CD4-positive, alpha-beta T cell (primary cell): ENCODE measurements at regions of chr2 and their contacts with region 1.

Region 1: DNA sequence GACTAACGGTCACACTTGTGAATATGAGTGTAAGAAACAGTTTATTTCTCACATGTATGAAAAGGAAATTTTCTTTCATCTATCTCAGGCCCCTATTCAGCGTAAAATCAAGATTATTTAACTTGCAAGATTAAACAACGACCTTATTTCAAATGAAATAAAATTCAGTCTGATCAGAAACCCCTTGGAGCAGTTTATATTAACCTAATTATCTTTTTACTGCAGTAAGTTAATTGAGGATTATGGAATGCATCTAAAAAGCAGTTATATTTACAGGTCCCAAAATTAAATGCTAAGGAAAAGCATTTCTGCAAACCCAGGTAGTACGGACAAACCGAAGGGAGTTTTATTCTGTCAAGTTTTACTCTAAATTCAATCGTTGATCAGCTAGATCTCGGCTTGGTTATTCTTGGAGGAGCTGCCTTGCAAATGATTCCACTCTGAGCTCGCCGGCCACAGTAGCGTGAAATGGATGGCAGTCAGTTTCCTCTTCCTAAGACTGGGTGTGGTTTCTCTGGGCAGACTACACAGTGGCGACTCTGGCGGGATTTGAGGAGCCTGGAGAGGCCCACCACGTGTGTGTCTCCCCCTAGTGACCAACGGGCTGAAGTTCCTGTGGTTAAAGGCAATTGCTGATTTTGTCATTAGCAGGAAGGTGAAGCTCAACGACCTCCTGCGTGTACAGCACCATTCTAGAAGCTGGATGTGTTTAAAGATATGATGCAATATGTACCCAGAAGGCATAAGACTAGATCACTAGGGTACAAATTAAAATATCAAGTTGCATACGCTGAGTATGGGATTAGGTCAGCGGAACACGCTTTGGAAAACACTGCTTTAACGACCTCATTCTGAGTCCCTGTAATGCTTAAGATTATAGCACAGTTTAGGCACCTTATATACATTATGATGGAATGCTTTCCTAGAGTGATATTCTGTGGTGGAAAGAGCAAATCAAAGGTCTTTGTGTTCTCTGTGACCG is 36.4 kb downstream of the PRKRA start:
- DNase-seq: peak; percentile 48 to 89 (median 60)
- ATAC-seq: peak; percentile 64
- H3K4me3 ChIP-seq: peak overlapping the region; percentile 77
- H3K4me3 Mint-ChIP-seq: peak overlapping the region; percentile 91
- H3K27ac ChIP-seq: peak overlapping the region; percentile 65 to 86
- H3K27ac Mint-ChIP-seq: peak overlapping the region; percentile 81
- H3K4me1 ChIP-seq: peaks cover 12% of the 10 kb centered on the region
- H3K4me1 Mint-ChIP-seq: peaks cover 26% of the 10 kb centered on the region
- H3K27me3 ChIP-seq: no peaks in the 10 kb centered on the region
- H3K27me3 Mint-ChIP-seq: no peaks in the 10 kb centered on the region
- CTCF ChIP-seq: peak; percentile 82

Region 2: GRCh38 chr2:177906041-177906718 is 508.4 kb before region 1 on chr2:
- CTCF ChIA-PET with region 1: no interaction called
- POLR2A ChIA-PET with region 1: no interaction called
- intact Hi-C with region 1: loop called in 1 of 2 experiments (anchors 5 kb)
- DNase-seq: peak; percentile 21 to 67 (median 44)
- ATAC-seq: peak; percentile 68
- H3K4me3 ChIP-seq: no peak overlapping the region
- H3K4me3 Mint-ChIP-seq: no peak overlapping the region
- H3K27ac ChIP-seq: no peak overlapping the region
- H3K27ac Mint-ChIP-seq: no peak overlapping the region
- H3K4me1 ChIP-seq: peaks cover 3% of the 10 kb centered on the region
- H3K4me1 Mint-ChIP-seq: no peaks in the 10 kb centered on the region
- H3K27me3 ChIP-seq: no peaks in the 10 kb centered on the region
- H3K27me3 Mint-ChIP-seq: no peaks in the 10 kb centered on the region
- CTCF ChIP-seq: peak; percentile 73

Region 3: GRCh38 chr2:178251151-178251955 is 163.2 kb before region 1 on chr2:
- CTCF ChIA-PET with region 1: no interaction called
- POLR2A ChIA-PET with region 1: no interaction called
- intact Hi-C with region 1: no loop called
- DNase-seq: no peak
- ATAC-seq: no peak
- H3K4me3 ChIP-seq: no peak overlapping the region
- H3K4me3 Mint-ChIP-seq: no peak overlapping the region
- H3K27ac ChIP-seq: no peak overlapping the region
- H3K27ac Mint-ChIP-seq: no peak overlapping the region
- H3K4me1 ChIP-seq: no peaks in the 10 kb centered on the region
- H3K4me1 Mint-ChIP-seq: no peaks in the 10 kb centered on the region
- H3K27me3 ChIP-seq: no peaks in the 10 kb centered on the region
- H3K27me3 Mint-ChIP-seq: peaks cover 7% of the 10 kb centered on the region
- CTCF ChIP-seq: no peak

Region 4: GRCh38 chr2:178397002-178397605 is 17.5 kb before region 1 on chr2:
- CTCF ChIA-PET with region 1: interaction called, 24 read pairs
- POLR2A ChIA-PET with region 1: interaction called, 4 read pairs
- intact Hi-C with region 1: loop called (anchors 1 to 2 kb)
- DNase-seq: peak in 4 of 14 experiments; percentile 10 to 70 (median 58)
- ATAC-seq: peak; percentile 76
- H3K4me3 ChIP-seq: no peak overlapping the region
- H3K4me3 Mint-ChIP-seq: no peak overlapping the region
- H3K27ac ChIP-seq: no peak overlapping the region
- H3K27ac Mint-ChIP-seq: no peak overlapping the region
- H3K4me1 ChIP-seq: no peaks in the 10 kb centered on the region
- H3K4me1 Mint-ChIP-seq: no peaks in the 10 kb centered on the region
- H3K27me3 ChIP-seq: no peaks in the 10 kb centered on the region
- H3K27me3 Mint-ChIP-seq: peaks cover 5% of the 10 kb centered on the region
- CTCF ChIP-seq: peak; percentile 76

Region 5: GRCh38 chr2:178404368-178404767 is 10.2 kb before region 1 on chr2:
- CTCF ChIA-PET with region 1: interaction called, 24 read pairs
- POLR2A ChIA-PET with region 1: interaction called, 11 read pairs
- intact Hi-C with region 1: no loop called
- DNase-seq: no peak
- ATAC-seq: no peak
- H3K4me3 ChIP-seq: no peak overlapping the region
- H3K4me3 Mint-ChIP-seq: no peak overlapping the region
- H3K27ac ChIP-seq: no peak overlapping the region
- H3K27ac Mint-ChIP-seq: no peak overlapping the region
- H3K4me1 ChIP-seq: no peaks in the 10 kb centered on the region
- H3K4me1 Mint-ChIP-seq: no peaks in the 10 kb centered on the region
- H3K27me3 ChIP-seq: no peaks in the 10 kb centered on the region
- H3K27me3 Mint-ChIP-seq: peaks cover 5% of the 10 kb centered on the region
- CTCF ChIP-seq: no peak

Region 6: DNA sequence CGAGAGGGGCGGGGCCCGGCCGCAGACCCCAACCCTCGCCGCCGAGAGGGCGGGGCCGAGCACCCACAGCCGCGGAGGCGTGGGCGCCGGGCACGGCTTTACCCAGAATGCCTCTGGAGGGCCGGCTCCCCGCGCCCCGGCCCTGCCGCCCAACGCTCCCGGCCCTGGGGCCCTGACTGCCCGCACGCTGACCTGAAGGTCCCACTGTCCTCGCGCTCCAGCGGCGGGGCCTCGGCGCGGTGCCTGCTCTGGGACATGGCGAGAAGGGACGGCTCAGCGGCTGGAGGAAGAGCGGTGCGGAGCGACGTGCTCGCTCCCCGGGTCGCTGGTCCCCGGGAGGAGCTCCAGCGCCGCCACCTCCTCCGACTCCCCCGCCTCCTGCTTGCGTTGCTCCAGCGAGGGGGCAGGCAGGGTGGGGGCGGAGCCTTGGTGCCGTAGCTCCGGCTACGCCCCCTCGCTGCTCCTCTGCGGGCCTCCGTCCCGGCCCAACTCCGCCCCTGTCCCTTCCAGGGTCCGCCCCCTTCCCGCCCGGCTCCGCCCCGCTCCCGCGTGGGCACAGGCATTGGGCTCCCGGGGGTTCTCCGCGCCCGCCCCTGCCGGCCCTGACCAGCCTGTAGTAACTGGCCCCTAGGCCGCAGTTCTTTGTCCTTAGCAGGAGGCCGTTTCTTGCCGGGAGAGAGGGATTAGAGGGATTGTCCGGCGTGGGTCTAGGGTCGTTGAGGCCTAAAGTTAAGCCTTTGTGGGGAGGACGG is 36.4 kb after region 1 on chr2 and contains the starts of genes PJVK and PRKRA:
- CTCF ChIA-PET with region 1: interaction called, 24 read pairs
- POLR2A ChIA-PET with region 1: interaction called, 45 read pairs
- intact Hi-C with region 1: loop called in 1 of 2 experiments (anchors 2 kb)
- DNase-seq: peak; percentile 90 to 98 (median 95)
- ATAC-seq: peak; percentile 84
- H3K4me3 ChIP-seq: peak within 1 kb of the TSS; percentile 77
- H3K4me3 Mint-ChIP-seq: peak within 1 kb of the TSS; percentile 91
- H3K27ac ChIP-seq: peak within 1 kb of the TSS; percentile 78 to 98
- H3K27ac Mint-ChIP-seq: peak within 1 kb of the TSS; percentile 97
- H3K4me1 ChIP-seq: peaks cover 27% of the 10 kb centered on the region
- H3K4me1 Mint-ChIP-seq: peaks cover 35% of the 10 kb centered on the region
- H3K27me3 ChIP-seq: no peaks in the 10 kb centered on the region
- H3K27me3 Mint-ChIP-seq: no peaks in the 10 kb centered on the region
- CTCF ChIP-seq: no peak
- total RNA-seq, gene PJVK: 3.8 to 4.2 TPM
- total RNA-seq, gene PRKRA: 118 to 120 TPM